Ovary (tissue), 10 donors: ENCODE measurements at regions of chr2 and their contacts with region 1.

Region 1: GRCh38 chr2:71068218-71069035 is at the start of gene NAGK:
- DNase-seq: peak; percentile 96 to 98 (median 97)
- H3K4me3 ChIP-seq: peak within 1 kb of the TSS; percentile 97
- H3K27ac ChIP-seq: peak within 1 kb of the TSS; percentile 46 to 95
- H3K4me1 ChIP-seq: no peaks in the 10 kb centered on the region
- H3K27me3 ChIP-seq: no peaks in the 10 kb centered on the region
- CTCF ChIP-seq: peak in 2 of 3 donors; percentile 19 to 33
- EP300 ChIP-seq: peak; percentile 63
- POLR2A ChIP-seq: peak; percentile 100
- total RNA-seq, gene NAGK: 58.9 to 94.6 (median 81.1) TPM

Region 2: GRCh38 chr2:70984576-70985282 is 83.7 kb before region 1 on chr2:
- intact Hi-C with region 1: loop called in 1 of 4 experiments (anchors 5 kb)
- DNase-seq: peak; percentile 45 to 72 (median 57)
- H3K4me3 ChIP-seq: no peak overlapping the region
- H3K27ac ChIP-seq: no peak overlapping the region
- H3K4me1 ChIP-seq: no peaks in the 10 kb centered on the region
- H3K27me3 ChIP-seq: no peaks in the 10 kb centered on the region
- CTCF ChIP-seq: peak; percentile 39 to 50 (median 42)
- EP300 ChIP-seq: no peak
- POLR2A ChIP-seq: no peak